ENCODE measurements at regions of chr3 and their contacts with region 1.

Region 1: GRCh38 chr3:32238453-32239306 is at the start of gene CMTM8:
- DNase-seq: peak; percentile 16 to 76 (median 58)
- ATAC-seq: peak; percentile 84
- H3K4me3 ChIP-seq: peak within 1 kb of the TSS; percentile 55 to 68
- H3K4me3 Mint-ChIP-seq: peak within 1 kb of the TSS; percentile 86
- H3K27ac ChIP-seq: peak within 1 kb of the TSS in 1 of 2 experiments; percentile 18
- H3K27ac Mint-ChIP-seq: peak within 1 kb of the TSS; percentile 49
- H3K4me1 ChIP-seq: peaks cover 19% of the 10 kb centered on the region
- H3K4me1 Mint-ChIP-seq: peaks cover 24% of the 10 kb centered on the region
- H3K27me3 ChIP-seq: peaks cover 0 to 10% of the 10 kb centered on the region in 2 experiments
- H3K27me3 Mint-ChIP-seq: peaks cover 3% of the 10 kb centered on the region
- CTCF ChIP-seq: no peak
- total RNA-seq, gene CMTM8: 0.58 to 0.87 TPM

Region 2: GRCh38 chr3:31029706-31030105 is 1209.0 kb before region 1 on chr3:
- CTCF ChIA-PET with region 1: no interaction called
- POLR2A ChIA-PET with region 1: no interaction called
- intact Hi-C with region 1: no loop called
- DNase-seq: no peak
- ATAC-seq: no peak
- H3K4me3 ChIP-seq: no peak overlapping the region
- H3K4me3 Mint-ChIP-seq: no peak overlapping the region
- H3K27ac ChIP-seq: no peak overlapping the region
- H3K27ac Mint-ChIP-seq: no peak overlapping the region
- H3K4me1 ChIP-seq: no peaks in the 10 kb centered on the region
- H3K4me1 Mint-ChIP-seq: no peaks in the 10 kb centered on the region
- H3K27me3 ChIP-seq: no peaks in the 10 kb centered on the region
- H3K27me3 Mint-ChIP-seq: no peaks in the 10 kb centered on the region
- CTCF ChIP-seq: no peak

Region 3: GRCh38 chr3:31353166-31353565 is 885.5 kb before region 1 on chr3:
- CTCF ChIA-PET with region 1: no interaction called
- POLR2A ChIA-PET with region 1: no interaction called
- intact Hi-C with region 1: no loop called
- DNase-seq: no peak
- ATAC-seq: no peak
- H3K4me3 ChIP-seq: no peak overlapping the region
- H3K4me3 Mint-ChIP-seq: no peak overlapping the region
- H3K27ac ChIP-seq: no peak overlapping the region
- H3K27ac Mint-ChIP-seq: no peak overlapping the region
- H3K4me1 ChIP-seq: no peaks in the 10 kb centered on the region
- H3K4me1 Mint-ChIP-seq: no peaks in the 10 kb centered on the region
- H3K27me3 ChIP-seq: no peaks in the 10 kb centered on the region
- H3K27me3 Mint-ChIP-seq: no peaks in the 10 kb centered on the region
- CTCF ChIP-seq: no peak

Region 4: GRCh38 chr3:32018757-32019564 is 219.7 kb before region 1 on chr3:
- CTCF ChIA-PET with region 1: no interaction called
- POLR2A ChIA-PET with region 1: no interaction called
- intact Hi-C with region 1: no loop called
- DNase-seq: peak in 2 of 9 experiments; percentile 47 to 61
- ATAC-seq: peak; percentile 48
- H3K4me3 ChIP-seq: no peak overlapping the region
- H3K4me3 Mint-ChIP-seq: no peak overlapping the region
- H3K27ac ChIP-seq: no peak overlapping the region
- H3K27ac Mint-ChIP-seq: no peak overlapping the region
- H3K4me1 ChIP-seq: no peaks in the 10 kb centered on the region
- H3K4me1 Mint-ChIP-seq: no peaks in the 10 kb centered on the region
- H3K27me3 ChIP-seq: no peaks in the 10 kb centered on the region
- H3K27me3 Mint-ChIP-seq: peaks cover 2% of the 10 kb centered on the region
- CTCF ChIP-seq: peak; percentile 90

Region 5: GRCh38 chr3:32254268-32254667 is 15.6 kb after region 1 on chr3:
- CTCF ChIA-PET with region 1: interaction called, 13 read pairs
- POLR2A ChIA-PET with region 1: interaction called, 3 read pairs
- intact Hi-C with region 1: no loop called
- DNase-seq: no peak
- ATAC-seq: no peak
- H3K4me3 ChIP-seq: no peak overlapping the region
- H3K4me3 Mint-ChIP-seq: no peak overlapping the region
- H3K27ac ChIP-seq: no peak overlapping the region
- H3K27ac Mint-ChIP-seq: no peak overlapping the region
- H3K4me1 ChIP-seq: peaks cover 7% of the 10 kb centered on the region
- H3K4me1 Mint-ChIP-seq: peaks cover 6% of the 10 kb centered on the region
- H3K27me3 ChIP-seq: no peaks in the 10 kb centered on the region
- H3K27me3 Mint-ChIP-seq: peaks cover 2% of the 10 kb centered on the region
- CTCF ChIP-seq: no peak

Region 6: DNA sequence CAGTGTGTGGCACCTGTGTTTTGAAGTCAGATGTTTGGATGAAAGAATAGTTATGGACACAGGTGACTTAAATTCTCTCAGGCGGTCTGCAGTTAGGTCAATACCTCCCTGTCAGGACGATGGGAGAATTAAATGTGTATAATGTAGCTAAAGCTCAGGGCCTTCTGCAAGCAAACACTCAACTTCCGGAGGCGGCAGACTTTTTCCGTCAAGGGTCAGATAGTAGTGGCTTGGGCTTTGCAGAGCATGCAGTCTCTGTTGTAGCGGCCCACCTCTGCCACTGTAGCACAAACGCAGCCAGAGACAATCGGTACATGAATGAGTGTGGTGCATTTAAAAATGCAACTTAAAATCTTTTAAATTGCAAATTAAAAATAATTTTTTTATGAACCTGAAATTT is 47.2 kb after region 1 on chr3:
- CTCF ChIA-PET with region 1: interaction called, 10 read pairs
- POLR2A ChIA-PET with region 1: no interaction called
- intact Hi-C with region 1: no loop called
- DNase-seq: peak in 2 of 9 experiments; percentile 6 to 15
- ATAC-seq: no peak
- H3K4me3 ChIP-seq: no peak overlapping the region
- H3K4me3 Mint-ChIP-seq: no peak overlapping the region
- H3K27ac ChIP-seq: no peak overlapping the region
- H3K27ac Mint-ChIP-seq: no peak overlapping the region
- H3K4me1 ChIP-seq: peaks cover 25% of the 10 kb centered on the region
- H3K4me1 Mint-ChIP-seq: peaks cover 7% of the 10 kb centered on the region
- H3K27me3 ChIP-seq: no peaks in the 10 kb centered on the region
- H3K27me3 Mint-ChIP-seq: no peaks in the 10 kb centered on the region
- CTCF ChIP-seq: no peak

Region 7: DNA sequence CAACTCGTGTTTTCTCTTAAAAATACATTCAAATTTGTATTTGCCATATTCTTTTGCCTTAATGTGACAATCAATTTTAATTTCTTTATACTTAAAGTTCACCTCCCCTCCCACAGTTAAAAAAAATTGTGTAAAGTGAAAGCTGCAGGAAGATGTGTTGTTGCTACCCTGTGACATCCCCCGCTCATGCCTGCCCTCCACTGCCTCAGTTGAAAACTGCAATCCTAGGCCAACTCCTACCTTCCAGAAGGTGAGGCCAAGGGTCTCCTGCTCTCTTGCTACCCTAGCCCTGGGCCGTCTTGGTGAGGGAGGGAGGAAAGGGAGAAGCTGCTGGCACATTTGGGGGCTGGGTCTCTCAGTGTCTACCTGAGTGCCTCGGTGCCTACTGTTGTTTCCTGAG is 96.0 kb after region 1 on chr3:
- CTCF ChIA-PET with region 1: interaction called, 9 read pairs
- POLR2A ChIA-PET with region 1: no interaction called
- intact Hi-C with region 1: loop called in 1 of 2 experiments (anchors 5 kb)
- DNase-seq: peak in 8 of 9 experiments; percentile 29 to 66 (median 37)
- ATAC-seq: peak; percentile 81
- H3K4me3 ChIP-seq: no peak overlapping the region
- H3K4me3 Mint-ChIP-seq: no peak overlapping the region
- H3K27ac ChIP-seq: no peak overlapping the region
- H3K27ac Mint-ChIP-seq: peak overlapping the region; percentile 89
- H3K4me1 ChIP-seq: peaks cover 18% of the 10 kb centered on the region
- H3K4me1 Mint-ChIP-seq: peaks cover 28% of the 10 kb centered on the region
- H3K27me3 ChIP-seq: no peaks in the 10 kb centered on the region
- H3K27me3 Mint-ChIP-seq: no peaks in the 10 kb centered on the region
- CTCF ChIP-seq: no peak